ENCODE measurements at regions of chr11 and their contacts with region 1.

Region 1: GRCh38 chr11:111283945-111284481 is 14.3 kb upstream of the POU2AF3 start:
- DNase-seq: no peak
- H3K4me3 ChIP-seq: no peak overlapping the region
- H3K4me3 Mint-ChIP-seq: no peak overlapping the region
- H3K27ac Mint-ChIP-seq: peak overlapping the region; percentile 14
- H3K4me1 ChIP-seq: peaks cover 44% of the 10 kb centered on the region
- H3K4me1 Mint-ChIP-seq: peaks cover 29% of the 10 kb centered on the region
- H3K27me3 ChIP-seq: no peaks in the 10 kb centered on the region
- H3K27me3 Mint-ChIP-seq: no peaks in the 10 kb centered on the region
- CTCF ChIP-seq: no peak

Region 2: DNA sequence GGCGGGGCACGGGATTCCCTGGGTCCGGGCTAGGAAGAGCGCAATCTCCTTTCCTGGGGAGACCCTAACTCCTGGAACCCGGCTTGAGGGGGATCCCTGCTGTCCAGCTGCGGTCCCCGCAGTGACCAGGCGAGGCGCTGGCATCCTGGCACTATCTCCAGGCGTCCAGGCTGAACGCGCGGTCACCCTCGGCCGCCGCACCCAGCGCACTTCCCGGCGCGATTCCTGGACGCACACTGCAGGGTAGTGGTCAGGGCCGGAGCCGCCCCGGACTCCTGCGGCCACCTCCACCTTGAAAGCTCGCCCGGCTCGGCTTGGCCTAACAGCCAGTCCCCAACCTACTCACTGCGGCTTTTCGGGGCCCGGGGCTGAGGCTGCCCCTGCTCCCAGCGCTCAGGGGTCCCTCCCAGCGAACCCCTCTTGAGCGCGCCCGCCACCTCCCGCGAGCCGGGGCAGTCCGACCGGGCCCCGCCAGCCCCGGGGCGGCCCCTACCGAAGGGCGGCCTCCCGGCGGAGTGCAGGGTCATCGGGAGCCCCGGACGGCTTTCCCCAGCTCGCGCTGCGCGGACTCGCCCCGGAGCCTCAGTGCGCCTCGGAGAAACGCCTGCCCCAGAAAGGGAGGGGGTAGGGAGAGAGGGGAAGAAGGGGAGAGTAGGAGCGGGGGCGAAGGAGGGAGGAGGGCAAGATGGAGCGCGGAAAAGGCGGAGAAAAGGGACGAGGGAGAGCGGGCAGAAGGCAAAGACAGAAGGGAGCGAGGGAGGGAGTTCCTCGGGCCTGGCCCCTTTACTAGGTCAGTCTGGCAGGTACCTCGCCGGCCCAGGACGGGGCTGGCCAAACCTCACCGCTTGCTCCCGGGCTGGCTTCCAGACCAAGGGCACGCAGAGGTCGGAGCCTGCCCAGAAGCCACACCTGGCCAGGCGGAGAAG is 15.4 kb after region 1 on chr11:
- CTCF ChIA-PET with region 1: interaction called, 5 read pairs
- POLR2A ChIA-PET with region 1: no interaction called
- intact Hi-C with region 1: loop called (anchors 1 kb)
- DNase-seq: peak; percentile 79 to 87
- H3K4me3 ChIP-seq: peak overlapping the region; percentile 76
- H3K4me3 Mint-ChIP-seq: peak overlapping the region; percentile 82
- H3K27ac Mint-ChIP-seq: peak overlapping the region; percentile 72
- H3K4me1 ChIP-seq: peaks cover 37% of the 10 kb centered on the region
- H3K4me1 Mint-ChIP-seq: peaks cover 34% of the 10 kb centered on the region
- H3K27me3 ChIP-seq: no peaks in the 10 kb centered on the region
- H3K27me3 Mint-ChIP-seq: no peaks in the 10 kb centered on the region
- CTCF ChIP-seq: peak; percentile 65 to 89

Region 3: GRCh38 chr11:111336582-111337256 is 52.7 kb after region 1 on chr11:
- CTCF ChIA-PET with region 1: interaction called, 3 read pairs
- POLR2A ChIA-PET with region 1: interaction called, 4 read pairs
- intact Hi-C with region 1: loop called (anchors 1 kb)
- DNase-seq: peak; percentile 87 to 88
- H3K4me3 ChIP-seq: no peak overlapping the region
- H3K4me3 Mint-ChIP-seq: peak overlapping the region; percentile 16
- H3K27ac Mint-ChIP-seq: peak overlapping the region; percentile 86
- H3K4me1 ChIP-seq: peaks cover 58% of the 10 kb centered on the region
- H3K4me1 Mint-ChIP-seq: peaks cover 57% of the 10 kb centered on the region
- H3K27me3 ChIP-seq: no peaks in the 10 kb centered on the region
- H3K27me3 Mint-ChIP-seq: no peaks in the 10 kb centered on the region
- CTCF ChIP-seq: no peak

Region 4: DNA sequence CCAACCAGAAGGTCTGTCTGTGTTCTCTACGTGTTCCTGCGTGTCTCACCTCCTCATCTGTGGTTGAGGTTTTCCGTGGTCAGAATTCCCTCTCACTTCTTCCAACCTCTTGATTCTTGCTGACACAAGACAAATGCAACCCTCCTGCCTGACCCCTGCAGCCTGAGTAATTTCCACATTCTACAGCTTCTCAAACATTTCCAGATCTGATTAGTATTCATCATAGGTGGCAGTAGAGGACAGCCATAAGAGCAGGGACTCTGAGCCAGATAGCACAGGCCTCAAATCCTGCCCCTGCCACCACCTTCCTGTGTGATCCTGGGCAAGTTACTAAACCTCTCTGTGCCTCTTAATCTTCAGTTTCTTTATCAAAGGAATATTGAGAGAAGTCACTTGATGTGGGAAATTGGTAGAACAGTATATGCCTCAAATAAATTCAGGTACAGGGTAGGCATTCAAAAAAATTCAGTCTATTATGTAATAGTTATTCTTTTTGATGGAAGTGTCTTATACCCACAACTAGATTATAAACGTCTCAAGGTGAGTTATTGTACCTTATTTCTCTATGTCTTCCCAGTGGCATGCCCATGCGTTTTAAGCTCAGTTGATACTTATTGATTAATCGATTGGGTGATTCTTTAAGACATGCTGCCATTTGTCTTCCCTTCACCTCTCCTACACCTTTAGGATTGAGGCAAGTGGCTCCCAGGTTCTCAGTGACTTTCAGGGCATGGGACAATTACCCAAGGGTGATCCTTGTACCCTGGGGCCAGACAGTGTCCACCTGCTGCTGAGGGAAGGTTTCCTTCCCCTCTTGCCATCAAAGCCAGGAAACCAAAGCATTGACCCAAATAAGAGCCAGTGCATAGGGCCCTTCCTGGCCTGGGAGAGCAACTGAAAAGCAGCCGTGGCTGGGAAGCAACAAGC is 75.5 kb after region 1 on chr11:
- CTCF ChIA-PET with region 1: no interaction called
- POLR2A ChIA-PET with region 1: interaction called, 4 read pairs
- intact Hi-C with region 1: loop called (anchors 1 kb)
- DNase-seq: no peak
- H3K4me3 ChIP-seq: no peak overlapping the region
- H3K4me3 Mint-ChIP-seq: peak overlapping the region; percentile 13
- H3K27ac Mint-ChIP-seq: no peak overlapping the region
- H3K4me1 ChIP-seq: peaks cover 73% of the 10 kb centered on the region
- H3K4me1 Mint-ChIP-seq: peaks cover 41% of the 10 kb centered on the region
- H3K27me3 ChIP-seq: no peaks in the 10 kb centered on the region
- H3K27me3 Mint-ChIP-seq: no peaks in the 10 kb centered on the region
- CTCF ChIP-seq: peak in 1 of 2 experiments; percentile 11

Region 5: GRCh38 chr11:111429066-111429506 is 145.1 kb after region 1 on chr11:
- CTCF ChIA-PET with region 1: interaction called, 99 read pairs
- POLR2A ChIA-PET with region 1: no interaction called
- intact Hi-C with region 1: loop called (anchors 1 kb)
- DNase-seq: peak; percentile 78 to 82
- H3K4me3 ChIP-seq: no peak overlapping the region
- H3K4me3 Mint-ChIP-seq: no peak overlapping the region
- H3K27ac Mint-ChIP-seq: no peak overlapping the region
- H3K4me1 ChIP-seq: no peaks in the 10 kb centered on the region
- H3K4me1 Mint-ChIP-seq: peaks cover 5% of the 10 kb centered on the region
- H3K27me3 ChIP-seq: no peaks in the 10 kb centered on the region
- H3K27me3 Mint-ChIP-seq: peaks cover 3% of the 10 kb centered on the region
- CTCF ChIP-seq: peak; percentile 80 to 85

Region 6: DNA sequence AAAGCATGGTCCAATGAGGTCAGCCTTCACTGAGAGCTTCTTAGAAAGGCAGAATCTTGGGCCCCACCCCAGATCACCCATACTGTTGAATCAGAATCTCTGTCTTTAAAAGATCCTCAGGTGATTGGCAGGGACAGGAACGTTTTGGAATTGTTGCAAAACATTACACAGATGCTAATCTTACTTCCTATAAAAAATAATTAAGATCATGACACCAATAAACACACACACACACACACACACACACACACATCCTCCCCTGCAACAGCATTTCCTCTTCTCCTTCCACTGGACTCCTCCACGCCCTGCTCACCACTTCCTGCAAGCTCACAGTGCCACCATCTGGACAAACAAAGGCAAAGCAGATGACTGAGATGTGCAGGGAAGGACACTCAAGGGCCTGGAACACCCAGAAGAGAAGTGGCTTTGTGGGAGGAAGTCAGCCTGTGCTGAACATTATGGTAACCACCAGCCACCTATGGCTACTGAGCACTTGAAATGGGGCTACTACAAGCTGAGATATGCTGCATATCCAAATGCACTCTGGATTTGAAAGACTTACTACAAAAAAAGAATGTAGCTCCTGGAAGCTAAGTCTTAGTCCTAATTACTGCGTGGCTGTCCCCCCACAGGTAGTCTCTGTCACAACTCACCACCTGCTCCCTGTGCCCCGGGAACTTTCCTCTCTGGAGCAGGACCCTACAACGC is 162.5 kb after region 1 on chr11:
- CTCF ChIA-PET with region 1: interaction called, 9 read pairs
- POLR2A ChIA-PET with region 1: no interaction called
- intact Hi-C with region 1: loop called (anchors 1 kb)
- DNase-seq: peak; percentile 91
- H3K4me3 ChIP-seq: no peak overlapping the region
- H3K4me3 Mint-ChIP-seq: no peak overlapping the region
- H3K27ac Mint-ChIP-seq: no peak overlapping the region
- H3K4me1 ChIP-seq: no peaks in the 10 kb centered on the region; the same call in 1 of the 2 replicates
- H3K4me1 Mint-ChIP-seq: no peaks in the 10 kb centered on the region
- H3K27me3 ChIP-seq: peaks cover 2% of the 10 kb centered on the region; the same call in 1 of the 2 replicates
- H3K27me3 Mint-ChIP-seq: peaks cover 2% of the 10 kb centered on the region
- CTCF ChIP-seq: peak; percentile 96 to 99